GM13976 (cell line): ENCODE measurements at regions of chr14 and their contacts with region 1.

Region 1: DNA sequence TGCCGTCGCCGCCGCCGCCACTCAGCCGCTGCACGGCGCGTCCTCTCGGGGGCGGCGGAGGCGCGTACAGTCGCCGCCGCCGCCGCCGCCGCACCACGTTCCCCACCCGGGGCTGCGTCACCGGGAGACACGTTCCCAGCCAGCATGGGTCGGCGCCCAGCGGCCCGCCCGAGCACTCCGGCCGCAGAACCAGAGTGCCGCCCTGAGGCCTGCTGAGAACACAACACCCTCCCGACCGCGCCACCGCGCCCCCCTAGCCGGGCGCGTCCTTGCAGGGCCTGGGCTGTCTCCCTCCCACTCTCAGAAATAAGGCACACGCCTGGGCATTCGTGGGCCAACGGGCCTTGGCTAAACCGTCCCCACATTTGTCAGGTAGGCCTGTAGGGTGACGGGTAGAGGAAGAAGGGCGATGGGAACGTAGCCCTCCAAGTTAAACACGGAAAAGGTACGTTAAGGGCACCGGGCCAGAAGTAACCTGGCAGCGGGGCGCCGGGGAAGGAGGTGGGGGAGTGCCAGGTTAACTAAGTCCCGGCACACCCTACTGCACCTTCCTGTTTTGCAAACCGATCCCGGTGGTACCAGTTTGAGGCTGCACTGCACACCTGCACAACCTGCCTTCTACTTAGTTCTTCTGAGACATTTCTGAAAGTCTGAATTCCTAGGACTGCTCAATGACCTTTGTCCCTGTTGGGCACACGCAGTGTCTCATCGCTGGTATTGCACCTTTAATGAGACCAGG is at the start of gene MAP4K5:
- DNase-seq: peak; percentile 94
- CTCF ChIP-seq: peak; percentile 98

Region 2: DNA sequence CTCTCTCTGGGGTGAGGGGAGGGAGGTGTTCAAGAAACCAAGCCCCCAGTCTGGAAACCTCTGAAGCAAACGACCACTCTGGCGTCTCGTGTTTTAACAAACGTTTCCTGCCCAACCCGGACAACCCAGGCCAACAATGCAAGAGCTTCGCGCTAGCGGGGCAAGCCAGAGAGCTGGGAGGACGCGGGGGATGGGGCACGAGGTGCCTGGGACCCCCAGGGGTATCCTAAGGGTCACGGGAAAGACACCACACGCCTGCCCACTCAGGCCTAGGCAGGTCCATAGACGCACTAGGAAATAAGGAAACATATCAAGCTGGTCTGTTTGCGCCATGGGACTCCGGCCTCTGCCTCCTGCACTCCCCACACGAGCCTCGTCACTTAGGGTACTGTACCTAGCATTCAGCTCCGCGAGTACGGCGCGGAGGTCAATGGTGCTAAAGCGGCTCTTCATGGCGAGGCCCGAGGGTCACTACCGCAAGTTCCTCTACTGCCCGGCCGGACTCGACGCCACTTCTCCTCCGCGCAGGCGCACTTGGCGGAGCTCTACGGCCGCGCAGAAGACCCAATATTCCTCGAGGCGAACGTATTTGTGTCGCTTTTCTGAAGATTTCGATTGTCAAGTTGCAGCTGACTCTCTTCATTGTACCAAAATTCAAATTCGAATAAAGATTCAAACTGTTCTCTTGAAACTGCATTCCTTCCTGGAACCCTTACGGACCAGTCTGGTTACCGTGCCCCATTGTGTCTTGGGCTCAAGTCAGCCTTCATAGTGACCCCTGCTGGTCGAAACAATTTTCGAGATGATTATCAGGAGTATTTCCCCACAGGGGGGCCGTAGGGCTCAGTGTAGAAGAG is 680.1 kb before region 1 on chr14 and contains the start of gene NEMF:
- in situ Hi-C with region 1: loop called (anchors 25 kb)
- DNase-seq: peak; percentile 84
- CTCF ChIP-seq: peak; percentile 60

Region 3: GRCh38 chr14:50139192-50139591 is 393.5 kb before region 1 on chr14:
- in situ Hi-C with region 1: loop called (anchors 25 kb)
- DNase-seq: no peak
- CTCF ChIP-seq: no peak

Region 4: GRCh38 chr14:50321009-50321660 is 211.5 kb before region 1 on chr14:
- in situ Hi-C with region 1: loop called (anchors 5 kb)
- DNase-seq: peak; percentile 77
- CTCF ChIP-seq: peak; percentile 74

Region 5: DNA sequence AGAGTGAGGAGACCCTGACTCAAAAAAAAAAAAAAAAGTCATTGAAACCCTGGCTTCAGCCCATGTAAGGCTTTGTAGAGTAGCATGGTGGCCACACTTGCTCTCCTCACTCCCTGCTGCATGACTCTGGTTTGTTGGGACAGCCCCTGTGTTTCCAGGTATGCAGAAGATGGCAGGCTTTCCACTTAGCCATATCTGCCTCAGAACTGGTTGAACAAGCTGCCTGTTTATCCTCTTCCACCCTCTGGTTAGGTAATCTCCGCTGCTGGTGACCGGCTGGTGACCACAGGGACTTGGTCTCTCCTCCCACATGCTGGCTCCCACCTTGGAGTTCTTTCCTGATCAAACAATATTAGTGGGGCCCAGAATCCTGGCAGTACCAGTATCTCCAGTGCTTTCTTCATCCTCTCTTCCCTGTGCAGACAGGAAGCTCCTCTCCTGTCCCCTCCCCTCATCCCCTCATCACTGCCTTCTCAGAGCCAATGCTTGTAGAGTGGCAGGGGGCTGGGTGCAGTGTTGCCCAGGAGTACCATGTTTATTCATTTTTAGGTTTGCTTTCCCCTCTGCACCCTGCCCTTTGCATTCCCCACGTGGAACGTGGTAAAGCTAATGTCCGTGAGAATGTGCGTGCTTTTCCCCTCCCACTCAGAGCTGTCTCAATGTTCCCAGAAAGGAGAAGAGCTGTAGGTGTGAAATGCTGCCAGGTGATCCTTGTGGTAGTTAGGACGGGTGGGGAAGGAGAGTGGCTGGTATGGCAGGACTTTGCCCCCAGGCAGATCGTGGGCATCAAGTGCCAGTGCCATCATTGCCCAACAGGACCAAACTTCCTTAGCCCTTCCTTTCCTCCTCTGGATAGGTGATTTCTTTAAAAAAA is 350.5 kb after region 1 on chr14:
- in situ Hi-C with region 1: no loop called
- DNase-seq: no peak
- CTCF ChIP-seq: no peak